ENCODE measurements at regions of chrX and their contacts with region 1.

Region 1: DNA sequence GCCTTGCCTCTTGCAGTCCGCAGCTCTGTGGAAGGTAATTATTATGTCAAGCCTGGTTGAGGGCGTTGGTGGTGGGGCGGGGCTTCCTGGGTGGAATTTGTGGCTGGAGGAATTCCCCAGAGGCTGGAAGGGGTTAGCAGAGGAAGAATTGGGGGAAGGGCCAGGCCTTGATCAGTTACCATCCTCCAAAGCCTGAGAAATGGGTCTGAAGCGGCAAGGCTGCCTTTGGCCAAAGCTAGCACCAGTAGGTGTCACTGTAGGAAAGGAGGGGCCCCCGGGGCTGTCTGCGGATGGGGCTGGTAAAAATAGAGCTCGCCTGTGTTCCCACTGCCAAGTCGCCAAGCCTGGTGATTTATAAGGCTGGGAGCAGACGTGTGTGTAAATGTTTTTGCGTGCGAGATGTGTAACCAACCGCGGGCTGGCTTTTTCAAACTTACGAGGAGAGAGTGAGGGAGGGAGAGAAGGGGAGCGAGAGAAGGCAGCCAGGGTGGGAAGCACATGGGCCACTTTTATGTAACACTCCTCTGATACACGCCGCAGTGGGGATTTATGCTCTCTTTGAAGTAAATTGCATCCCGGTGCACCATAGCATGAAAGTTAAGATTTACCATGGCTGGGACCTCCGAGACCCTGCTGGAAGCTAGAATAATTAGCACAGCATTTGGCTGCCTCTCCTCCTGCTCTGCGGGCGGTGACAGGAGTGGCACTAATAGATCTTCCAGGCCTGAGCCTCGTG is 366.9 kb downstream of the BCOR start:
- DNase-seq: peak; percentile 84 to 88
- ATAC-seq: peak; percentile 84
- H3K4me3 ChIP-seq: no peak overlapping the region
- H3K27ac ChIP-seq: peak overlapping the region in 1 of 2 donors; percentile 81
- H3K4me1 ChIP-seq: peaks cover 0 to under 1% of the 10 kb centered on the region in 2 donors
- H3K27me3 ChIP-seq: no peaks in the 10 kb centered on the region

Region 2: DNA sequence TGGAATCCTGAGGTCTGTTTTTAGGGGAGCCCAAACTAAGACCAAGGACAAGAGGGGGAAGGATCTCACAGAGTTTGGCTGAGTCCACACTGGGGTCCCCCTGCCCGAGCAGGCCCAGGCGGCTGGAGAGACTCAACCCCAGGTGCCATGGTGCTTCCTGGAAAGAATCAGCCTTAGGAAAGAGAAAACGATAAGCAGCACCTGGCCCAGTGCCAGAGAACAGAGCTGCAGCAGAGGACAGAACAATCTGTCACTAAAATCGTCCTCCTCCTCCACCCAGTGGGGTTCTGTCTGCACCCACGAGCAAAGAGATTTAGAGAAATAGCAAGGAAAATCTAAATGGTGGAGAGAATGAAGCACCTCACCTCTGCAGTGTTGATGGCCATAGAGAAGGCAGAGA is 103.6 kb before region 1 on chrX:
- intact Hi-C with region 1: no loop called
- DNase-seq: no peak
- ATAC-seq: no peak
- H3K4me3 ChIP-seq: no peak overlapping the region
- H3K27ac ChIP-seq: no peak overlapping the region
- H3K4me1 ChIP-seq: no peaks in the 10 kb centered on the region
- H3K27me3 ChIP-seq: no peaks in the 10 kb centered on the region

Region 3: GRCh38 chrX:39808471-39808917 is 77.7 kb after region 1 on chrX:
- intact Hi-C with region 1: loop called (anchors 5 to 10 kb)
- DNase-seq: peak; percentile 40 to 68
- ATAC-seq: peak; percentile 47
- H3K4me3 ChIP-seq: no peak overlapping the region
- H3K27ac ChIP-seq: peak overlapping the region in 1 of 2 donors; percentile 30
- H3K4me1 ChIP-seq: no peaks in the 10 kb centered on the region
- H3K27me3 ChIP-seq: no peaks in the 10 kb centered on the region

Region 4: DNA sequence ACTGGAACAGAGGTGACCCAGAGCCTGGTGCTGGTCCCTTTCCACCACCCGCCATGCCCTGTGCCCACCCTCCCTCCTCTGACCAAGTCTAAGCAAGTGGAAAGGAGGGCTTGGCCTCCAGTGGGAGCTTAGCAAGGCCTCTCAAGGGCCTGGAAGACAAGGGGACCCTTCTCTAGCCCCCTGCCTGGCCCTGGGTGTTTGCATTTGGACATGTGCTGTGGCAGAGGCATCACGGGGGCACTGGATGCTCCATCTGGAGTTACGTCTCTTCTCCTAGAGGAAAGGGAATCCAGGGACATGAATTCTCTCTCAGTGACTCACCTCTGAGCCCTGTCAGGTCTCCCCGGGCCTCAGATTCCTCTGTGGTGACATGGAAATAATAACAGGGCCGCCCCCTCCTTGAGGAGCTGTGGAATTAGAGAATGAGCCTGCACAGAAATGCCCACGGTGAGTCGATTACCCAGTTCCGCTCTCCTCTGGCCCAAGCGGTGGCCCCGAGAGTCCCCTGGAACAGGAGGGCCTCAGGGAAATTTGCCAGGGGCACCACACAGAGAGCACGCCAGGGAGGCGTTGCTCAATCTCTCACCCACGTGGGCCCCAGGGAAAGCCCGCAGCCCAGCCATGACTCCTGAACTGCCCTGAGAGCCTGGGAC is 177.3 kb after region 1 on chrX:
- intact Hi-C with region 1: loop called (anchors 1 to 10 kb)
- DNase-seq: peak; percentile 85 to 90
- ATAC-seq: peak; percentile 55
- H3K4me3 ChIP-seq: no peak overlapping the region
- H3K27ac ChIP-seq: peak overlapping the region in 1 of 2 donors; percentile 89
- H3K4me1 ChIP-seq: no peaks in the 10 kb centered on the region
- H3K27me3 ChIP-seq: no peaks in the 10 kb centered on the region

Region 5: DNA sequence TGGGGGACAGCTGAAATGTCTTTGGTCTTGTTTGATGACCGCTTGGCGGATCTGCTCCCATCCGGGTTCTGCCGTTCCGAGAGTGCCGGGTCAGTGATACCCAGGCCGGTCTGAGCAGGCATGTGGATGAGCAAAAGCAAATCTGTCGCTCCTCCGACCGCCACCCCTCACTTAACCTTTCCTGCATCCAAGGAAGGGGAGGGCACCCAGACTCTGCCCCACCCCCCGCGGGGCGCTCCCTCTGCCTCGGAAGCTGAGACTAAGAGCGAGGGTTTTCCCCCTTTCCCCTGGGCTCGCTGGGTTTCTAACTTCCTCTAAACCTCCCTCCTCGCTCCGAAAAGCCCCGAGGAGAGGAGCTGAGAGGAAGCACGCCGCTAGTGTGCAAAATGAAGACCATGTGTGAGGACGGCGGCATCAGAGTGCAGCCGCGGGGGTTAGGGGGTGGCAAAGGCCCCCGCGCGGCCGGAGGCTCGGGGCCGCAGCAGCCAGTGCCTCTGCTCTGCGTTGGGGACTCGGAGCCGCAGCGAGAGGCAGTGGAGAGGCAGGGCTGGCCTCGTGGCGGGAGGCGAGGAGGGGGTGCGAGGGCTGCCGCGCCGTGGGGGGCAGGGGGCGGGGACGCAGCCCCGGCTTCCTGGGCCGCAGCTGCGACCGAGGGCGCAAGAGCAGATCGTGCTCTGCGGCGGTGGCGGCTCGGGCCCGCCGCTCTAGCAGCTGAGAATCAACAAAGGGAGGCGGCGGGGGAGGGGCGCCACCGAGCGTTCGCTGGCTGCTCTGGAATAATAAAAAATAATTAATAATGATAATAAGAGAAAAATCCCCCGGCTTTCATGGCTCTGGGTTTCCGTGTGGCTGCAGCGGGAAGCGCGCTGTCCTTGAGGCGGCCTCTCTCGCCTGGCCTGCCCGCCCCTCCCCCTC is 422.8 kb after region 1 on chrX:
- intact Hi-C with region 1: loop called (anchors 5 to 10 kb)
- DNase-seq: peak; percentile 71 to 82
- ATAC-seq: peak; percentile 15
- H3K4me3 ChIP-seq: peak overlapping the region; percentile 31 to 38
- H3K27ac ChIP-seq: no peak overlapping the region
- H3K4me1 ChIP-seq: no peaks in the 10 kb centered on the region
- H3K27me3 ChIP-seq: peaks cover 0 to 2% of the 10 kb centered on the region in 2 donors